Naive thymus-derived CD4-positive, alpha-beta T cell (primary cell): ENCODE measurements at regions of chr19 and their contacts with region 1.

Region 1: GRCh38 chr19:38374429-38375176 is at the start of gene PSMD8:
- DNase-seq: peak; percentile 95 to 99 (median 99)
- ATAC-seq: peak; percentile 99
- H3K4me3 ChIP-seq: peak within 1 kb of the TSS; percentile 96
- H3K4me3 Mint-ChIP-seq: peak within 1 kb of the TSS; percentile 96 to 100 (median 98)
- H3K27ac ChIP-seq: peak within 1 kb of the TSS; percentile 93
- H3K27ac Mint-ChIP-seq: peak within 1 kb of the TSS; percentile 90 to 99 (median 98)
- H3K4me1 ChIP-seq: peaks cover 17 to 19% of the 10 kb centered on the region in 2 donors
- H3K4me1 Mint-ChIP-seq: peaks cover 17 to 32% (median 29%) of the 10 kb centered on the region in 7 donors
- H3K27me3 ChIP-seq: peaks cover 0 to 4% of the 10 kb centered on the region in 2 donors
- H3K27me3 Mint-ChIP-seq: peaks cover 0 to 8% (median 2%) of the 10 kb centered on the region in 5 donors
- total RNA-seq, gene PSMD8: 68.4 to 181 (median 75.8) TPM

Region 2: GRCh38 chr19:37172368-37173366 is 1201.9 kb before region 1 on chr19 and contains the start of gene ZNF585A:
- CTCF ChIA-PET with region 1: no interaction called
- POLR2A ChIA-PET with region 1: no interaction called
- intact Hi-C with region 1: loop called in 1 of 2 experiments (anchors 2 kb)
- DNase-seq: peak; percentile 68 to 92 (median 88)
- ATAC-seq: peak; percentile 100
- H3K4me3 ChIP-seq: peak within 1 kb of the TSS; percentile 90
- H3K4me3 Mint-ChIP-seq: peak within 1 kb of the TSS in 3 of 10 donors; percentile 36 to 73 (median 39)
- H3K27ac ChIP-seq: peak within 1 kb of the TSS; percentile 84
- H3K27ac Mint-ChIP-seq: no peak within 1 kb of the TSS
- H3K4me1 ChIP-seq: no peaks in the 10 kb centered on the region
- H3K4me1 Mint-ChIP-seq: peaks cover 0 to 16% (median 4%) of the 10 kb centered on the region in 7 donors
- H3K27me3 ChIP-seq: no peaks in the 10 kb centered on the region
- H3K27me3 Mint-ChIP-seq: no peaks in the 10 kb centered on the region
- total RNA-seq, gene ZNF585A: 3.5 to 24.3 (median 7.2) TPM

Region 3: DNA sequence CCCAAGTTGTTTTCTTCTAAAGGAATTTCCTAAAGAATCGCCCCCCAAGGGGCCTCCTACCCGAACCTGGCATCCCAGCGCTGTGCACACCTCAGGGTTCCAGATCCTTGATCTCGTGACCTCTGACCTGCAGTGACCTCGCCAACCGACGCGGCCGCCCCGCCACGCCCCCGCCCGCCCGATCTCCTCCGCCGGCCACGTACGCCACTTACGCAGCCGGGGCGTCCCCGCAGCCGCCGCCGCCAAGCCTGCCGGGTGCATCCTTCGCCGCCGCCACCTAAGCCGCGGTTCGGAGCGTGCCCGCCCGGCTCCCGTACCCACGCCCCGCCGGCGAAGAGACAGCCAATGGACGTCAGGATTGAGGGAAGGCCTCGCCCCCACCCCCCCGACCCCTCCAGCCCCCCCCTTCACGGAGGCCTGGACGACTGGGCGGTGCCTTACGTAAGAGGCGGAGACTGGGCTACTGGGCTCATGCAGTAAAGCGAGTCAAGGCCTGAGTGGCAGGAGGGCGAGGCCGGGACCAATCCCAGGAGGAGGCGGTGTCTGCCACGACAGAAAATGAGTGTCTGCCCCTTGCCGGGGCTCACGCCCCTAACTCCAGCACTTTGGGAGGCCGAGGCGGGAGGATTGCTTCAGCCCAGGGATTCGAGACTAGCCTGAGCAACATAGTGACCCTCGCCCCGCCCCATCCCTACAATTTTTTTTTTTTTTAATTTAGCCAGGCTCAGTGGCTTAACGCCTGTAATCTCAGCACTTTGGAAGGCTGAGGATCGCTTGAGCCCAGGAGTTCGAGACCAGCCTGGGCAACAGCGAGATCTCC is 58.7 kb before region 1 on chr19 and contains the start of gene YIF1B:
- CTCF ChIA-PET with region 1: no interaction called
- POLR2A ChIA-PET with region 1: interaction called, 7 read pairs
- intact Hi-C with region 1: loop called (anchors 1 kb)
- DNase-seq: peak; percentile 93 to 97 (median 95)
- ATAC-seq: peak; percentile 95
- H3K4me3 ChIP-seq: peak within 1 kb of the TSS; percentile 90
- H3K4me3 Mint-ChIP-seq: peak within 1 kb of the TSS; percentile 87 to 96 (median 91)
- H3K27ac ChIP-seq: peak within 1 kb of the TSS; percentile 97
- H3K27ac Mint-ChIP-seq: peak within 1 kb of the TSS; percentile 90 to 97 (median 93)
- H3K4me1 ChIP-seq: peaks cover 14 to 30% of the 10 kb centered on the region in 2 donors
- H3K4me1 Mint-ChIP-seq: peaks cover 29 to 57% (median 48%) of the 10 kb centered on the region in 7 donors
- H3K27me3 ChIP-seq: no peaks in the 10 kb centered on the region
- H3K27me3 Mint-ChIP-seq: no peaks in the 10 kb centered on the region
- total RNA-seq, gene YIF1B: 26.1 to 84.7 (median 38.0) TPM

Region 4: GRCh38 chr19:38387550-38388348 is 13.1 kb after region 1 on chr19 and contains the start of gene GGN:
- CTCF ChIA-PET with region 1: interaction called, 4 read pairs
- POLR2A ChIA-PET with region 1: interaction called, 12 read pairs
- intact Hi-C with region 1: loop called (anchors 1 kb)
- DNase-seq: peak; percentile 60 to 83 (median 72)
- ATAC-seq: peak; percentile 83
- H3K4me3 ChIP-seq: peak within 1 kb of the TSS; percentile 74
- H3K4me3 Mint-ChIP-seq: peak within 1 kb of the TSS; percentile 81 to 95 (median 91)
- H3K27ac ChIP-seq: no peak within 1 kb of the TSS
- H3K27ac Mint-ChIP-seq: peak within 1 kb of the TSS in 8 of 9 donors; percentile 43 to 95 (median 84)
- H3K4me1 ChIP-seq: peaks cover 13 to 34% of the 10 kb centered on the region in 2 donors
- H3K4me1 Mint-ChIP-seq: peaks cover 5 to 26% (median 21%) of the 10 kb centered on the region in 7 donors
- H3K27me3 ChIP-seq: no peaks in the 10 kb centered on the region
- H3K27me3 Mint-ChIP-seq: peaks cover 6 to 41% (median 30%) of the 10 kb centered on the region in 5 donors
- total RNA-seq, gene GGN: 0.29 to 0.60 (median 0.39) TPM in 3 of 5 experiments, not detected in the others

Region 5: DNA sequence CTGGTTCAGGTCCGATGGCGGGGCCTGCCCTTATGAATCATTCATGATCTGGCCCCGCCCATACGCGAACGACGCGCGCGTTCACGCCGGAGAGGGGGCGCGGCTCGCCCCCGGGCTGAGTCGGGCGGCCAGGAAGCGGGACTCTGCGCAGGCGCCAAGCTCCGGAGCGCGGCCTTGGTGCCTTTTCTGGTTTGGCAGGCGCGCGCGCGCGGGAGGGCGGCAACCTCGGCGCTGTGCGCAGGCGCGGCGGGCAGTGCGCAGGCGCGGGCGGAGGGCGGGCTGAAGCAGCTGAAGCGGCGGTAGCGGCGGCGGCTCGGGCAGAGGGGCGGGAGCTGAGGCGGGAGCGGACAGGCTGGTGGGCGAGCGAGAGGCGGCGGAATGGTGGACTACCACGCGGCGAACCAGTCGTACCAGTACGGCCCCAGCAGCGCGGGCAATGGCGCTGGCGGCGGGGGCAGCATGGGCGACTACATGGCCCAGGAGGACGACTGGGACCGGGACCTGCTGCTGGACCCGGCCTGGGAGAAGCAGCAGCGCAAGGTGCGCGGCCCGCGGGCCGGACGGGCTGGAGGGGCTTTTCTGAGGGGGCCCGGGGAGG is 272.9 kb after region 1 on chr19 and contains the start of gene ACTN4:
- CTCF ChIA-PET with region 1: interaction called, 3 read pairs
- POLR2A ChIA-PET with region 1: no interaction called
- intact Hi-C with region 1: loop called in 1 of 2 experiments (anchors 1 kb)
- DNase-seq: peak; percentile 98 to 100 (median 100)
- ATAC-seq: peak; percentile 98
- H3K4me3 ChIP-seq: peak within 1 kb of the TSS; percentile 85
- H3K4me3 Mint-ChIP-seq: peak within 1 kb of the TSS; percentile 74 to 99 (median 89)
- H3K27ac ChIP-seq: peak within 1 kb of the TSS; percentile 69
- H3K27ac Mint-ChIP-seq: peak within 1 kb of the TSS; percentile 74 to 87 (median 84)
- H3K4me1 ChIP-seq: peaks cover 20 to 27% of the 10 kb centered on the region in 2 donors
- H3K4me1 Mint-ChIP-seq: peaks cover 20 to 52% (median 33%) of the 10 kb centered on the region in 7 donors
- H3K27me3 ChIP-seq: peaks cover 0 to 17% of the 10 kb centered on the region in 2 donors
- H3K27me3 Mint-ChIP-seq: peaks cover 0 to 33% (median 19%) of the 10 kb centered on the region in 5 donors
- total RNA-seq, gene ACTN4: 49.2 to 355 (median 54.4) TPM

Region 6: DNA sequence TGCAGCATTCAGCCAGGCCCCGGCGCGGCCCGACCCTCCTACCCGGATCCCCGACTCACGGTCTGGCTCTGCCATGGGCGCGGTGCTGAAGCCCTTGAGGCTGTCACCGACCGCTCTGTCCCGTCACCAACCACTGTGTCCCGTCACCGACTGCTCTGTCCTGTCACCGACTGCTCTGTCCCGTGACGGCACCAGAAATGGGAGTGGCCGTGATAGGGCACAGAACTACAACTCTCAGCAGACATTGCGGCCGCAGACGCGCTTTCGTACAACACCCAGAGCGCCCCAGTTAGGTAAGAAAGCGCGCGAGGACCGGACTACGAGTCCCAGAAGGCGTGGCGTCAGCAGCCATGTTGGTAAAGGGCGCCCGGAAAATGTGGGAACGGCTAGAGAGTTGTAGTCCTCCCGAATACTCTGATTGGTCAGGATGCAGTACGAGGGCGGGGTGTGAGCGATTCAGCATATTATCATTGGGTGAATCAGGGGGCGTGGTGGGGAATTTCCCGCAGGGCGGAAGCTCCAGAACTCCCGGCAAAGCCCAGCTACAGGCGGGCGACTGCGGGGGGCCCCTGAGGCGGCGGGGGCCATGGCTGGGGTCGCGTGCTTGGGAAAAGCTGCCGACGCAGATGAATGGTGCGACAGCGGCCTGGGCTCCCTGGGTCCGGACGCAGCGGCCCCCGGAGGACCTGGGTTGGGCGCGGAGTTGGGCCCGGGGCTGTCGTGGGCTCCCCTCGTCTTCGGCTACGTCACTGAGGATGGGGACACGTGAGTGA is 525.0 kb after region 1 on chr19 and contains the starts of genes NFKBIB and SIRT2:
- CTCF ChIA-PET with region 1: no interaction called
- POLR2A ChIA-PET with region 1: interaction called, 3 read pairs
- intact Hi-C with region 1: loop called (anchors 1 kb)
- DNase-seq: peak; percentile 86 to 100 (median 99)
- ATAC-seq: peak; percentile 93
- H3K4me3 ChIP-seq: peak within 1 kb of the TSS; percentile 74
- H3K4me3 Mint-ChIP-seq: peak within 1 kb of the TSS; percentile 88 to 100 (median 96)
- H3K27ac ChIP-seq: peak within 1 kb of the TSS; percentile 97
- H3K27ac Mint-ChIP-seq: peak within 1 kb of the TSS; percentile 86 to 99 (median 94)
- H3K4me1 ChIP-seq: peaks cover 15 to 29% of the 10 kb centered on the region in 2 donors
- H3K4me1 Mint-ChIP-seq: peaks cover 27 to 74% (median 50%) of the 10 kb centered on the region in 7 donors
- H3K27me3 ChIP-seq: no peaks in the 10 kb centered on the region
- H3K27me3 Mint-ChIP-seq: no peaks in the 10 kb centered on the region
- total RNA-seq, gene NFKBIB: 21.7 to 51.8 (median 34.1) TPM
- total RNA-seq, gene SIRT2: 42.9 to 78.5 (median 54.0) TPM